ENCODE measurements at regions of chr6 and their contacts with region 1.

Region 1: DNA sequence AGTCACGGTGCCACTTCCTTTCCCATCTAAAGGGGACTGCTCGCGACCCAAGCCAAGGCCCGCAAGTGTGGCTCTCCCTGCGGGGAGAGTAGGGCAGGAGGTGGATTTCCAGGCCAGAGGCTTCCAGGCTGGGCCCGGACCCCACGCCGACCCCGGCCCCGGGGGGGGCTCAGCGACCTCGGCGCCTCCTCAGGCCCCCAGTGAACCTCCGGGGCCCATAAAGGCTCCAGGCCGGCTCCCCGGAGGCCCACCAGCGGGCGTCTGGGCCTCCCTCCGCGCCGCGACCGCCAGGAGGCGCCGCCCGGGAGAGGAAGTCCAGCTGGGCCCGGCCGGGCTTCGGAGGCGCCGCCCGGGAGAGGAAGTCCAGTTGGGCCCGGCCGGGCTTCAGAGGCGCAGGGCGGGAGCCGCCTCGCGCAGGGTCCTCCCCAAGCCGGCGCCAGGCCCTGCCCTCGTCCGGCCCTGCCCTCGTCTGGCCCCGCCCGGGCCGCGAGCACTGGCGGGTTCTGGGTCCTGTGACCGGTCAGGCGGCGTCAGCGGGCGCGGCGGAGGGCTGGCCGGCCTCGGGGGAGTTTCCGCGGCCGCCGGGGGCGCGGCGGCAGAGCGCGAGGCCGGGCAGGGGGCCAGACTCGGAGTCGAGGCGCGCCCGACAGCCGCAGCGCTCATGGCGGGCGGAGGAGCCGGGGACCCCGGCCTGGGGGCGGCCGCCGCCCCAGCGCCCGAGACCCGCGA is at the start of gene RAB32:
- DNase-seq: peak; percentile 88
- ATAC-seq: peak; percentile 92
- H3K4me3 ChIP-seq: peak within 1 kb of the TSS; percentile 90
- H3K27ac ChIP-seq: peak within 1 kb of the TSS; percentile 42
- H3K4me1 ChIP-seq: peaks cover 36% of the 10 kb centered on the region
- H3K27me3 ChIP-seq: no peaks in the 10 kb centered on the region
- CTCF ChIP-seq: peak; percentile 62
- total RNA-seq, gene RAB32: 25.1 and 29.8 TPM in 2 replicates

Region 2: GRCh38 chr6:145954985-145955384 is 588.4 kb before region 1 on chr6:
- CTCF ChIA-PET with region 1: no interaction called
- POLR2A ChIA-PET with region 1: interaction called, 11 read pairs
- intact Hi-C with region 1: no loop called
- DNase-seq: no peak
- ATAC-seq: no peak
- H3K4me3 ChIP-seq: no peak overlapping the region
- H3K27ac ChIP-seq: no peak overlapping the region
- H3K4me1 ChIP-seq: no peaks in the 10 kb centered on the region
- H3K27me3 ChIP-seq: no peaks in the 10 kb centered on the region
- CTCF ChIP-seq: no peak

Region 3: GRCh38 chr6:145963216-145964068 is 579.9 kb before region 1 on chr6:
- CTCF ChIA-PET with region 1: no interaction called
- POLR2A ChIA-PET with region 1: interaction called, 4 read pairs
- intact Hi-C with region 1: loop called (anchors 1 kb)
- DNase-seq: peak; percentile 20
- ATAC-seq: peak; percentile 54
- H3K4me3 ChIP-seq: peak overlapping the region; percentile 78
- H3K27ac ChIP-seq: no peak overlapping the region
- H3K4me1 ChIP-seq: peaks cover 10% of the 10 kb centered on the region; the same call in 1 of the 2 replicates
- H3K27me3 ChIP-seq: no peaks in the 10 kb centered on the region
- CTCF ChIP-seq: no peak

Region 4: DNA sequence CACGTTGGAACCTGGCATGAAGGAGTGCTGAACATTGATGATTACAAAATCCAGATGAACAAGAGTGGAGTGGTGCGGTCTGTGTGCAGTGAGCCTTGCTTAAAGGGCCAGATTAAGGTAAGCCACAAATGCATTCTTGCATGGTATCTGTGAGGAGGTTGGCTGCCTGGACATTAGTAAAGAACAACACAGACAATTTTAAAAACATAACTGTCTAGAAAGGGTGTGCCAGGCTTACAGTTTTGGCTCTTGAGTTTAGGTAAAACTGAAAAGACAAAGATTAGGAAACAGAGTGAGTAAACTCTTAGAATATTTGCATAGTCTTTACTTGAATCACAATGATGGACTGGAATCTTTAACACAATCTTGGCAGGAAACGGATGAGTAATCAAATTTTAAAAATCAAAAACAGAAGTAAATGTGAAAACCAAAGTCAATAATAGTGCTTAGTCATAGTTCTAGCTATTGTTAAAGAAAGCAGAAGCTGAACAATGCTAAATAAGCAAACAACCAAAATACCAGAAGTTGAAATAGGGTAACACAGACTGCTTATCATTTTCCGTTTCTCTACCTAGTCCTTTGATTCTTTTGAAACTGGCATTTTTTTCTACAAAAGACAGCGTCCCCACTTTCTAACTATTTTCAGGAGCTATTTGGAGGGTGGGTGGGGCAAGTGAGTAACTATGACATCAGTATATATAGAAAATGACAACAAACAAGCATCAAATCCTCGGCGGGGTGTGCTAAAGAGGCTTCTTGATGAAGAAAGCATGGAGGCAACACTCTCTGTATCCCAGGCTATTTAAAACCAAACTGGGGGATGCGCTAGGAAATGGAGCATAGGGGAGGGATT is 185.6 kb before region 1 on chr6:
- CTCF ChIA-PET with region 1: no interaction called
- POLR2A ChIA-PET with region 1: interaction called, 5 read pairs
- intact Hi-C with region 1: loop called (anchors 5 kb)
- DNase-seq: peak; percentile 78
- ATAC-seq: peak; percentile 80
- H3K4me3 ChIP-seq: peak overlapping the region; percentile 46
- H3K27ac ChIP-seq: peak overlapping the region; percentile 85
- H3K4me1 ChIP-seq: peaks cover 33% of the 10 kb centered on the region
- H3K27me3 ChIP-seq: no peaks in the 10 kb centered on the region
- CTCF ChIP-seq: no peak

Region 5: DNA sequence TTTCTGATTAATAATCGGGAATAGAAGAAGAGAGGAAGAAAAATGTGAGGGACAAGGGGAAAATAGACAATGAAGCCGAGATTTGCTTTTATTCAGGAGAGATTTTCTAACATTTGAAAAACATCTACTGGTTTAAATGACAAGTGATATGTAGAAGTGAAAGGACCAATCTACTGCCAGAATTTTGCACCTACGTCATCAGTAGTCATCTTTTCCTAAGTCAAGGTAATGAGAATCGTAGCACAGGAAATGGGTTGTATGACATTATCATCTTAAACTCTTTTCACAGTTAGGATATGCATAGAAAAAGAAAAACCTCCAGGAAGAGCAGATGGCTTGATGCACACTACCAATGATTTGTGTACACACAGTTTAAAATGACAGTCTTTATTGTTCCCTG is 45.1 kb before region 1 on chr6:
- CTCF ChIA-PET with region 1: no interaction called
- POLR2A ChIA-PET with region 1: no interaction called
- intact Hi-C with region 1: no loop called
- DNase-seq: no peak
- ATAC-seq: no peak
- H3K4me3 ChIP-seq: no peak overlapping the region
- H3K27ac ChIP-seq: no peak overlapping the region
- H3K4me1 ChIP-seq: no peaks in the 10 kb centered on the region
- H3K27me3 ChIP-seq: no peaks in the 10 kb centered on the region; the same call in 1 of the 2 replicates
- CTCF ChIP-seq: no peak

Region 6: GRCh38 chr6:146532702-146533101 is 10.7 kb before region 1 on chr6:
- CTCF ChIA-PET with region 1: no interaction called
- POLR2A ChIA-PET with region 1: interaction called, 43 read pairs
- intact Hi-C with region 1: no loop called
- DNase-seq: no peak
- ATAC-seq: no peak
- H3K4me3 ChIP-seq: no peak overlapping the region
- H3K27ac ChIP-seq: no peak overlapping the region
- H3K4me1 ChIP-seq: no peaks in the 10 kb centered on the region
- H3K27me3 ChIP-seq: peaks cover 25% of the 10 kb centered on the region; the same call in 1 of the 2 replicates
- CTCF ChIP-seq: no peak

Region 7: DNA sequence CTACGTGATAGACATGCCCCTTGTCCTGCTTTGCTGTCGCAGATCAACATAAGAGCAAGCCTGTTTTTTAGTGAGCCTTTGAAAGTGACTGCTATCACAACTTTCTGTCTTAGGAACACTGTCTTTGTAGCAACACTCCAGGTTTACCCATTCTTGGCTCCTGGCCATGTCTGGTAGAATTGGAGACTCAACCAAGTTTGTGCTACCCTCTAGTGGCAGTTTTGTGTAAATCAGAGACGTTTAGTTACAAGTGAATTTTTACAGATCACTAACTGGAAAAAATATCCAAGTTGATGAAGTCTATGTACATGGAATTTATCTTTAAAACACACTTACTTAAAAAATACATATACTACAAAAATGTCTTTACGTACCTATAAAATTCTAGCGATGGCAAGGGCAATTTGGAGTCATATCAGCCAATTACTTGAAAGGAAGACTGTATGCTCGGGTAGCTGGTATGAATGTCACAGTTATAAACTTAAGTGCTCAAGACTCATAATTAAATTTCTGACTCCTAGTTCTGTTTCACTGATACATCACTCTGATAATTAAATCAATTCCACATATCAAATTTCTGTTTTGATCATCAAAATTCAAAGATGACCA is 156.8 kb after region 1 on chr6:
- CTCF ChIA-PET with region 1: interaction called, 7 read pairs
- POLR2A ChIA-PET with region 1: no interaction called
- intact Hi-C with region 1: loop called (anchors 1 kb)
- DNase-seq: peak; percentile 83
- ATAC-seq: no peak
- H3K4me3 ChIP-seq: no peak overlapping the region
- H3K27ac ChIP-seq: no peak overlapping the region
- H3K4me1 ChIP-seq: no peaks in the 10 kb centered on the region
- H3K27me3 ChIP-seq: no peaks in the 10 kb centered on the region
- CTCF ChIP-seq: peak; percentile 78

Measured in PC-3 (cell line).